CD8-positive, alpha-beta T cell (primary cell): ENCODE measurements at regions of chr14 and their contacts with region 1.

Region 1: GRCh38 chr14:67571272-67571850 is 28.7 kb downstream of the PIGH start:
- DNase-seq: peak; percentile 38 to 81 (median 70)
- ATAC-seq: peak; percentile 91
- H3K4me3 ChIP-seq: no peak overlapping the region
- H3K4me3 Mint-ChIP-seq: no peak overlapping the region
- H3K27ac ChIP-seq: no peak overlapping the region
- H3K27ac Mint-ChIP-seq: no peak overlapping the region
- H3K4me1 ChIP-seq: no peaks in the 10 kb centered on the region
- H3K4me1 Mint-ChIP-seq: no peaks in the 10 kb centered on the region
- H3K27me3 ChIP-seq: no peaks in the 10 kb centered on the region
- H3K27me3 Mint-ChIP-seq: peaks cover 6% of the 10 kb centered on the region
- CTCF ChIP-seq: peak; percentile 74

Region 2: GRCh38 chr14:67331368-67332125 is 239.8 kb before region 1 on chr14:
- CTCF ChIA-PET with region 1: no interaction called
- POLR2A ChIA-PET with region 1: no interaction called
- intact Hi-C with region 1: no loop called
- DNase-seq: no peak
- ATAC-seq: no peak
- H3K4me3 ChIP-seq: no peak overlapping the region
- H3K4me3 Mint-ChIP-seq: no peak overlapping the region
- H3K27ac ChIP-seq: no peak overlapping the region
- H3K27ac Mint-ChIP-seq: no peak overlapping the region
- H3K4me1 ChIP-seq: no peaks in the 10 kb centered on the region
- H3K4me1 Mint-ChIP-seq: no peaks in the 10 kb centered on the region
- H3K27me3 ChIP-seq: no peaks in the 10 kb centered on the region
- H3K27me3 Mint-ChIP-seq: no peaks in the 10 kb centered on the region
- CTCF ChIP-seq: no peak

Region 3: GRCh38 chr14:67420102-67420830 is 151.1 kb before region 1 on chr14:
- CTCF ChIA-PET with region 1: interaction called, 411 read pairs
- POLR2A ChIA-PET with region 1: interaction called, 3 read pairs
- intact Hi-C with region 1: no loop called
- DNase-seq: peak in 5 of 9 experiments; percentile 20 to 43 (median 39)
- ATAC-seq: no peak
- H3K4me3 ChIP-seq: no peak overlapping the region
- H3K4me3 Mint-ChIP-seq: no peak overlapping the region
- H3K27ac ChIP-seq: no peak overlapping the region
- H3K27ac Mint-ChIP-seq: no peak overlapping the region
- H3K4me1 ChIP-seq: no peaks in the 10 kb centered on the region
- H3K4me1 Mint-ChIP-seq: no peaks in the 10 kb centered on the region
- H3K27me3 ChIP-seq: no peaks in the 10 kb centered on the region
- H3K27me3 Mint-ChIP-seq: peaks cover 6% of the 10 kb centered on the region
- CTCF ChIP-seq: peak; percentile 26

Region 4: GRCh38 chr14:67526676-67527459 is 44.5 kb before region 1 on chr14:
- CTCF ChIA-PET with region 1: interaction called, 84 read pairs
- POLR2A ChIA-PET with region 1: no interaction called
- intact Hi-C with region 1: loop called (anchors 1 to 2 kb)
- DNase-seq: peak in 7 of 9 experiments; percentile 14 to 66 (median 30)
- ATAC-seq: peak; percentile 66
- H3K4me3 ChIP-seq: no peak overlapping the region
- H3K4me3 Mint-ChIP-seq: no peak overlapping the region
- H3K27ac ChIP-seq: no peak overlapping the region
- H3K27ac Mint-ChIP-seq: no peak overlapping the region
- H3K4me1 ChIP-seq: no peaks in the 10 kb centered on the region
- H3K4me1 Mint-ChIP-seq: no peaks in the 10 kb centered on the region
- H3K27me3 ChIP-seq: peaks cover 0 to 6% of the 10 kb centered on the region in 2 experiments
- H3K27me3 Mint-ChIP-seq: peaks cover 17% of the 10 kb centered on the region
- CTCF ChIP-seq: peak; percentile 55

Region 5: DNA sequence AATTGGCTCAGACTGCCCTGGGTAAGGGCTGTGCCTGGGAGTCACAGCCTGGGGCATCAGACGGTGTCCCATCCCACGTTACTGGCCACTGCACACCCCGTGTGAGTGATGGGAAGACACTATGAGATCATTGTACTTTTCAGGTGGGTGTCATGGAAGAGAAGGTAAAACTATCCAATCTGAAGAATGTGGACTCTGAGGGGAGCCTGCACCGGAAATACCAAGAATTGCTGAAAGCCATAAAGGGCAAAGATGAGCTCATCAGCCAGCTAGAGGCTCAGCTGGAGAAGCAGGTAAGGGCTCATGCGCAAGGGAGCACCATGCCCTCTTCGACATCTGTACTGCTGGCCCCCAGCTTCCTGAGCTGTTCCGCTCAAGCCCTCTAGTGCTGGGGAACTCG is 14.2 kb before region 1 on chr14:
- CTCF ChIA-PET with region 1: interaction called, 27 read pairs
- POLR2A ChIA-PET with region 1: no interaction called
- intact Hi-C with region 1: no loop called
- DNase-seq: no peak
- ATAC-seq: no peak
- H3K4me3 ChIP-seq: no peak overlapping the region
- H3K4me3 Mint-ChIP-seq: no peak overlapping the region
- H3K27ac ChIP-seq: no peak overlapping the region
- H3K27ac Mint-ChIP-seq: no peak overlapping the region
- H3K4me1 ChIP-seq: no peaks in the 10 kb centered on the region
- H3K4me1 Mint-ChIP-seq: no peaks in the 10 kb centered on the region
- H3K27me3 ChIP-seq: no peaks in the 10 kb centered on the region
- H3K27me3 Mint-ChIP-seq: no peaks in the 10 kb centered on the region
- CTCF ChIP-seq: no peak